Activated CD8-positive, alpha-beta T cell treated with anti-CD3 and anti-CD28 coated beads, Interleukin-2, amount 10 ng/mL, durations not matched to agents 7 days and 5 days (primary cell): ENCODE measurements at regions of chr3 and their contacts with region 1.

Region 1: GRCh38 chr3:187679638-187680396 is 9.6 kb upstream of the SST start:
- DNase-seq: peak; percentile 73
- ATAC-seq: peak; percentile 80
- H3K4me3 Mint-ChIP-seq: no peak overlapping the region
- H3K27ac Mint-ChIP-seq: no peak overlapping the region
- H3K4me1 Mint-ChIP-seq: peaks cover 2% of the 10 kb centered on the region
- H3K27me3 Mint-ChIP-seq: peaks cover 24% of the 10 kb centered on the region

Region 2: DNA sequence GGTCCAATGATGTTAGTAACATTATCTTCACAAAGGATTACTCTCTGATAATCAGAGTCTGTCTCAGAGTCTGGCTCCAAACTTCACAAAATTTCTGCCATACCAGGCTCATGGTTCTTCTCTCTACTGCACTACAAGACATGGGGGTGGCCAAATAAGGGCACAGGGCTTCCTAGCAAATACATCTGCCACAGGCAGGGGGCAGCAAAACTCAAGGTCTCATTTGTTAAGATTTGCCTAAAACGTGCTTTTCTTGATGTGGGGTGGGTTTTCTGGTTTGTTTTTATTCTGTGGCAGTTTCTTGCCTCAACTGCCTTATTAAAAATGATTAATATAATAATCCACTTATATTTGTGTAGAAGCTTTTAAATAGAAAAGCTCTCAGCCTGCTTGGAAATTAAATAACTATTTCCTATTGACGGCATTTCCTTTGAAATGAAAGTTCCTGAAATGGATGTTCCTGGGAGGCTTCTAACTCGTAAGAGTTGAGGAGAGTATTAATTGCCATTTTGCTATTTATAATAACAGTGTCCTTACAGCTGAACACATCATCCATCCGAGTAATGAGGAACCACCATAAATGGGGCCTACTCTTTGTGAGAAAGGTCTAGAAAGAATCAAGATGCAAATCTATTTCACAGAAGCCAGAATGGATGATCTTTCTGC is 63.4 kb before region 1 on chr3:
- CTCF ChIA-PET with region 1: interaction called, 91 read pairs
- POLR2A ChIA-PET with region 1: no interaction called
- DNase-seq: peak; percentile 74
- ATAC-seq: peak; percentile 74
- H3K4me3 Mint-ChIP-seq: no peak overlapping the region
- H3K27ac Mint-ChIP-seq: no peak overlapping the region
- H3K4me1 Mint-ChIP-seq: peaks cover 7% of the 10 kb centered on the region
- H3K27me3 Mint-ChIP-seq: peaks cover 19% of the 10 kb centered on the region

Region 3: GRCh38 chr3:187661267-187661666 is 18.6 kb before region 1 on chr3:
- CTCF ChIA-PET with region 1: interaction called, 19 read pairs
- POLR2A ChIA-PET with region 1: no interaction called
- DNase-seq: no peak
- ATAC-seq: no peak
- H3K4me3 Mint-ChIP-seq: no peak overlapping the region
- H3K27ac Mint-ChIP-seq: no peak overlapping the region
- H3K4me1 Mint-ChIP-seq: no peaks in the 10 kb centered on the region
- H3K27me3 Mint-ChIP-seq: peaks cover 31% of the 10 kb centered on the region

Region 4: DNA sequence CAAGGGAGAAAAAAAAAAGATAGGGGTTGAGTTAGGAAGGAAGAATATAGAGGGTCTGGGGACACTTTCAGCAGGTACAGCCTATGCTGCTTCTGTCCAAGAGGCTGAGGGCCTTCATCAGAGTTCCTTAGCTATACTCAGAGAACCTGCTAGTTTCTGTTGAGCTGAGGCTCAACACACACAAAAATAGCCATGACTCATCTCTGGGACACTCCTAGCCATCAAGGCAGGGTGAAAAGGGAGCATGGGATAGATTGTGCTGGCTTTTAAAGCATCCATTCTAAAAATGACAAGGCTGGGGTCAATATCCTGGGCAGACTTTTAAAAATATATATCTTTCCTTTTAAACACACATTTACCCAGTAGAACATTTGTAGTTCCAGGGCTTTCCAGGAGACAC is 25.3 kb after region 1 on chr3:
- CTCF ChIA-PET with region 1: interaction called, 35 read pairs
- POLR2A ChIA-PET with region 1: no interaction called
- DNase-seq: no peak
- ATAC-seq: no peak
- H3K4me3 Mint-ChIP-seq: no peak overlapping the region
- H3K27ac Mint-ChIP-seq: no peak overlapping the region
- H3K4me1 Mint-ChIP-seq: no peaks in the 10 kb centered on the region
- H3K27me3 Mint-ChIP-seq: peaks cover 10% of the 10 kb centered on the region